Breast epithelium (tissue), 4 donors: ENCODE measurements at regions of chr1 and their contacts with region 1.

Region 1: GRCh38 chr1:85952460-85952859 is 204.1 kb downstream of the COL24A1 start:
- DNase-seq: no peak
- H3K4me3 ChIP-seq: no peak overlapping the region
- H3K27ac ChIP-seq: no peak overlapping the region
- H3K4me1 ChIP-seq: no peaks in the 10 kb centered on the region
- H3K27me3 ChIP-seq: no peaks in the 10 kb centered on the region
- CTCF ChIP-seq: no peak
- POLR2A ChIP-seq: no peak

Region 2: DNA sequence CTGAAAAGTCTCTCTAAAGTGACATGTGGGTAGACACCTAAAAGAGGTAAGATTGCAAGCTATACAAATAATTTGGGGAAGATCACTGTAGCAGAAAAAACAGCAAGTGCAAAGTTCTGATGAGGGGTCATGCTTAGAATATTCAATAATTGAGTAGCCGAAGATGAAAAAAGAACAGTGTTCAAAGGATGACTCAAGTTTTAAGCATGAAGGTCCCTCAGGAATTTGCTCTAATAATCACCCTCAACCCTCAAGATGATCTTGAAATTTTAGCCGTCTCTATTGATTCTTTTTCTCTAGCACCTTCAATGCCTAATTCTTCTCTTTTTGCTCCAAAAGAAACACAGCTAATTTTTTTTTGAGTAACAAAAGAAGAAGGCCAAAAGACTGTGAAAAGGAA is 53.6 kb before region 1 on chr1:
- intact Hi-C with region 1: loop called (anchors 2 kb)
- DNase-seq: no peak
- H3K4me3 ChIP-seq: no peak overlapping the region
- H3K27ac ChIP-seq: no peak overlapping the region
- H3K4me1 ChIP-seq: no peaks in the 10 kb centered on the region
- H3K27me3 ChIP-seq: no peaks in the 10 kb centered on the region
- CTCF ChIP-seq: no peak
- POLR2A ChIP-seq: no peak

Region 3: GRCh38 chr1:86035101-86035500 is 82.6 kb after region 1 on chr1:
- intact Hi-C with region 1: no loop called
- DNase-seq: no peak
- H3K4me3 ChIP-seq: no peak overlapping the region
- H3K27ac ChIP-seq: no peak overlapping the region
- H3K4me1 ChIP-seq: no peaks in the 10 kb centered on the region
- H3K27me3 ChIP-seq: no peaks in the 10 kb centered on the region
- CTCF ChIP-seq: no peak
- POLR2A ChIP-seq: no peak